Dendritic cell treated with granulocyte-macrophage colony-stimulating factor and Interleukin-4, amounts not matched to agents 40 ng/mL and 50 ng/mL, for 4 days (primary cell): ENCODE measurements at regions of chr1 and their contacts with region 1.

Region 1: DNA sequence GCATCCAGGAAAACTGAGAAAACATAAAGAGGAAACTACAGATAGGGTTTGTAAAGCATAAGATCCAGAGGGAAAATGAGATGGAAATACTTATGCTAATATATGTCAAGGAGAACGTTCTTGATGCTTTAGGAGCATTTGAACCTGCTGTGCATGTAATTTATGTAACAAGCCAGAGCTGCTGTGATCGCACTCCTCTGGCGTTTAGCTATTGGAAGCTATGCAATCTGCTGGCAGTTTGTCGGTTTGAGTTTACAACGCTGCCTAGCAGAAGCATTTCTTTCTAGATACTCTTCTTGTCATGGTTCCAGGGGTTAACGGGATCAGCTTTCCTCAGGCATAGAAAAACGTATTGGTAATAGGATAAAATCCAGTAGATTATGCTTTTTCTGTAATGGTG is 182.7 kb downstream of the KCNH1 start:
- H3K4me3 Mint-ChIP-seq: no peak overlapping the region
- H3K27ac Mint-ChIP-seq: no peak overlapping the region
- H3K4me1 Mint-ChIP-seq: no peaks in the 10 kb centered on the region
- H3K27me3 Mint-ChIP-seq: no peaks in the 10 kb centered on the region

Region 2: DNA sequence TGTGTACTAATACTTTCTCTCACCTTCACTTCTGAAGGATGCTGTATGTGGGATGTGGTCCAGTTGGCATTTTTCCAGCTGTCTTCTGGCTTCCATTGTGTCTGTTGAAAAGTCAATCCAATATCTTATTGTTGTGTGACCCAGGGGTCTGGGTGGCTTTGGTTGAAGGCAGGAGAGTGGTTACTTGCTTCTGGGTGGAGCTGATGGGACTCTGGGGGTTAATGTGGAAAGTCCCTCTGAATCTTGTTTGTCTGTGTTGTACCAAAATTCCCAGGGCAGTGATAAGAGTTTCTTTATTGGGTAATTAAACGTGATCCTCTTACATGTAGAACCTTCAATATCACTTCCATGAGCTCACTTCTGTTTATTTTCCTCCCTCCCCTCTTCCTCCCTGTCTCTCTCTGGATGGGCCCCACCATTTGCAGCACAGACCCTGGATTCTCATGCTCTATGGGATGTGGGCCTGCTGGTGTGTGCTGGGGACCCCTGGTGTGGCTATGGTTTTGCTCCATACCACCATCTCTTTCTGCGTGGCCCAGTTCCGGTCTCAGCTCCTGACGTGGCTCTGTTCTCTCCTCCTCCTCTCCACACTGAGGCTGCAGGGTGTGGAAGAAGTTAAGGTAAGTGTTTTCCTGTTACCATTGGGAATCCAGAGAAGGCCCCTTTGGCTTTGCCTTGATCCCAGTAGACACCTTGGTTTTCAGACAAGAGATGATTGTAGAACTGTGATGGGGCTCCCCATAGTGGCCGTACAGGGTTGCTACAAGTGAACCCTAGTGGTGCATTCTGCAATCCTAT is 551.0 kb before region 1 on chr1:
- intact Hi-C with region 1: loop called (anchors 10 kb)
- H3K4me3 Mint-ChIP-seq: no peak overlapping the region
- H3K27ac Mint-ChIP-seq: no peak overlapping the region
- H3K4me1 Mint-ChIP-seq: no peaks in the 10 kb centered on the region
- H3K27me3 Mint-ChIP-seq: no peaks in the 10 kb centered on the region

Region 3: DNA sequence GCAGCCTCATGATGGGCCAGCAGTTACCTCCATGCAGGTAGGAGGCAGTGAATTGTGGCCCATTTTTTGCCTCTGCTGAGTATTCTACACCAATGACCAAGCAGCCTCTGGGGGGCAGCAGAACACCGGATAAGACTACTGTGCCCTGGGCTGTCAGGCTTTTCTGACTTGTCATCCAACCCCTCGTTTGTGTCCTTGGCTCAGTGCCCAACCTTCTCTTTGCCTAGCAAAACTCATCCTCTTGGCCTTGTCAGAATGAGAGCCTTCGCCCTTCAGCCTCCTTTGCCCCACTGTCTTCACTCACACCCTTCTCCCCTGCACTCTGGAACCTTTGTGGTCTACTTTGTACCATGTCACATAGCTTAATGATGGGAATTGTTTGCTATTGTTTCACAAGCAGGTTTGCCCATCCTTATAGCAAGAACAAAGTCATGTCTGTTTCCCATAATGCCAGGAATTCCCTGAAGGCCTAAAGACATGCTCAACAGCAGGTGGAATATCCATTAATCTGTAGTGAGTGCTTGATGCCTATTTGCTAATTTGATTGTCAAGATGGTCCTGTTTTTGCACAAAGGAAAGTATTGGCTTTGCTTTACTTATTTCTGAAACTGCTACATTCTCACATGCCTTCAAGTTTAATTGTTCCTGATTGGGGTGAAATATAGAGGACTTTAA is 366.7 kb before region 1 on chr1:
- intact Hi-C with region 1: loop called (anchors 2 kb)
- H3K4me3 Mint-ChIP-seq: no peak overlapping the region
- H3K27ac Mint-ChIP-seq: no peak overlapping the region
- H3K4me1 Mint-ChIP-seq: no peaks in the 10 kb centered on the region
- H3K27me3 Mint-ChIP-seq: no peaks in the 10 kb centered on the region